ENCODE measurements at regions of chr2 and their contacts with region 1.

Region 1: DNA sequence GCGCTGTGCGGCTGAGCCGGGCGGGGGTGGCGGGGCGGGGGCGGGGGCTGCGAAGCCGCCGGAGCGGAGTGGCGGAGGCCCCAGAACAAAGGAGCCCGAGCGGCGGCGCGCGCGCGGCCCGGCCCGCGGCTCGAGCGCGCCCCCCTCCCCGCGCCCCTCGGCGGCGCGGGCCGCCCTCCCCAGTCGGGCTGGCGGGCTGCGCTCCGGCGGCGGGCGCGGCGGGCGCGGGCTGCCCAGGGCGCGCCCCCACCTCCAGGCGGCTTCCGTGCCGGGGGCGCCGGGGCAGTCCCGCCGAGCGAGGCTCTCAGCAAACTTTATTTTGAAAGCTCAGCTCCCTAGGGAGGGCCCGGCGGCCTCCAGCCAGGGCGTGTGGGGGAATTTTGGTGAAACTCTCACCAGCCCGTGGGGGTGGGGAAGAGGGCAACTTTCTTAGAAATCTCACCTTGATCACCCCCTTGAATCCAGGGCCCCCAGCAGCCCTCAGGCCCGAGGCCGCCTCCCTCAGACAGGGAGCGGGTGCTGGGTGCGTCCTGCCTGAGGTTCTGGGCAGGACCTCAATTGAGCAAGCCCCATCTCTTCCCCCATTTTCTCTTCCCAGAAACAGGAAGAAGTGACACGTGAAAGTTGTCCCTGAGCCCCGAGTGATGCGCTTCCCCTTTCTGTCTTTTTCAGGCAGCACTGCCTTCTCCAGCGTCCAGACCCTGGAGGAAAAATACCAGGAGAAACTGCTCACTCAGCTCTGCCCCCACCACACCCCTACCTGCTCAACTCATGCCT is 786 bp downstream of the TET3 start:
- DNase-seq: peak; percentile 43 to 90
- H3K4me3 ChIP-seq: peak overlapping the region; percentile 40
- CTCF ChIP-seq: no peak
- POLR2A ChIP-seq: no peak

Region 2: GRCh38 chr2:73907840-73908452 is 77.5 kb before region 1 on chr2:
- intact Hi-C with region 1: no loop called
- DNase-seq: peak in 1 of 2 donors; percentile 66
- H3K4me3 ChIP-seq: no peak overlapping the region
- CTCF ChIP-seq: no peak
- POLR2A ChIP-seq: no peak

Region 3: GRCh38 chr2:73939419-73939818 is 46.1 kb before region 1 on chr2:
- intact Hi-C with region 1: loop called (anchors 10 kb)
- DNase-seq: peak; percentile 78 to 82
- H3K4me3 ChIP-seq: no peak overlapping the region
- CTCF ChIP-seq: no peak
- POLR2A ChIP-seq: no peak

Region 4: GRCh38 chr2:74104839-74105238 is 119.3 kb after region 1 on chr2:
- intact Hi-C with region 1: loop called (anchors 1 kb)
- DNase-seq: no peak
- H3K4me3 ChIP-seq: no peak overlapping the region
- CTCF ChIP-seq: no peak
- POLR2A ChIP-seq: no peak

Region 5: DNA sequence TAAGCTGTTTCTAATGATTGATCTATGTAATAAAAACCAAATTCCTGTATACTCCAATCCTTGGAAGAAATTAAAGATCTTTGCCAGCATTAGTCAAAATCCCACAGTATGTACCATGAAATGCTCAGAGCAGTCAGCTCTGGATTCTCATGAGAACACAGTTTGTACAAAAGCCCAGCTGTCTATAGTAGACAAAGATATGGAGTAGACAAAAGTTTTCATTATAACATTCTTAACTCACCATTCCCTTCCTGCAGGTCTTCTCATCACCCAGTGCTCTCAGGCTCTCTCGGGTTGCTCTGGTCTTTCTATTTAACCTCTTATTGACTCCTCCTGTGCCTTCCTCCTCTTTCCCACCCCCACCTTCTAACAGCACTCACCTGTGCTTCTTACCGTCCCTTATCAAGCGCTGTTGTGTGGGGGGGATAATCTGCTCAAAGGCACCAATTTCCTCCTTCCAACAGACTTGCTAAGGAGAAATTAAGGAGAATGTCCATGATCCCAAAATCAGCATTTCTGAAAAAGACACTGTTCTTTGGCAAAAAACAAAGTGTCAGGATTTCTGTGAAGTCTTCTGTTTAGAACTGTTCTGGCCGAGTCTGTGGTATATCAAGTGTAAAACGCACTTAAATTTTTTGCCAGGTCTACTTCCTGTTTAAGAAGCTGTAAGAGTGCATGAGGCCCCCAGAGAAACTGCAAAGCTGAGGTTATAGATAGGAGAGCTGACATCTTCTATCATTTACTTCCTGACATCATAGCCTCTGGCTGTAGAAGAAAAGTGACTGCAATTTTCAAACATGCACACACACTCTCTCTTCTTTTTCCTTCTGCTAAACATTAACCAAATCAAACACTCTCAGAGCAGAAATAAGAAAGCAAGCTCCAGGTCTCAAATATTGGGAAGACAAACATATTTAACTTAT is 1431.2 kb after region 1 on chr2:
- intact Hi-C with region 1: no loop called
- DNase-seq: no peak
- H3K4me3 ChIP-seq: no peak overlapping the region
- CTCF ChIP-seq: no peak
- POLR2A ChIP-seq: no peak

Measured in lower leg skin (tissue), 4 donors.